CD14-positive monocyte (primary cell): ENCODE measurements at regions of chrX and their contacts with region 1.

Region 1: DNA sequence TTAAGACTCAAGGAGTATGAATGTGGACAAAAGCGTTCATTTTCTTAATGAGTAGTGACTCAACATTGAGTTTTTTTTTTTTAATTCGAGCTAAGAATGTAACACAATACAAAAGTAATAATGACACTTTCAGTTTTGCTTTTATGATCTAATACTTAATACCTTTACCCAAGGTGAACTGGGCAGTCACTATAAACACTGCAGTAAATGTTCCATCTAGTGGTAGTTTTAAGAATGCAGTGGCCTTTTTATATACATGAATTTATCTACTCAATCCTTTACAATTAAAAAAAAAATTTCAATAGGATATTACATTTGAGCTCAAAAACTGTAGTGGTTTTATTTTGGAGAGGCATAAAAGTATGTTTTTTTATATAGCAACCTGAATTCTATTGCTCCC is 33.9 kb downstream of the PDK3 start:
- DNase-seq: peak in 1 of 3 donors; percentile 18
- H3K4me3 ChIP-seq: no peak overlapping the region
- H3K4me3 Mint-ChIP-seq: no peak overlapping the region
- H3K27ac ChIP-seq: no peak overlapping the region
- H3K27ac Mint-ChIP-seq: peak overlapping the region in 1 of 7 donors; percentile 10
- H3K4me1 ChIP-seq: no peaks in the 10 kb centered on the region
- H3K4me1 Mint-ChIP-seq: peaks cover 11% of the 10 kb centered on the region
- H3K27me3 ChIP-seq: no peaks in the 10 kb centered on the region
- H3K27me3 Mint-ChIP-seq: peaks cover 0 to 6% (median 0%) of the 10 kb centered on the region in 3 donors
- CTCF ChIP-seq: peak; percentile 60

Region 2: GRCh38 chrX:24395775-24396174 is 103.2 kb before region 1 on chrX:
- intact Hi-C with region 1: loop called (anchors 2 to 5 kb)
- DNase-seq: peak; percentile 36 to 61 (median 58)
- H3K4me3 ChIP-seq: no peak overlapping the region
- H3K4me3 Mint-ChIP-seq: no peak overlapping the region
- H3K27ac ChIP-seq: no peak overlapping the region
- H3K27ac Mint-ChIP-seq: no peak overlapping the region
- H3K4me1 ChIP-seq: no peaks in the 10 kb centered on the region
- H3K4me1 Mint-ChIP-seq: peaks cover 5% of the 10 kb centered on the region
- H3K27me3 ChIP-seq: peaks cover 0 to 2% of the 10 kb centered on the region in 2 donors
- H3K27me3 Mint-ChIP-seq: peaks cover 0 to 21% (median 0%) of the 10 kb centered on the region in 3 donors
- CTCF ChIP-seq: peak; percentile 72